Natural killer cell (primary cell): ENCODE measurements at regions of chr2 and their contacts with region 1.

Region 1: GRCh38 chr2:65264821-65265670 is 37.4 kb downstream of the ACTR2 start:
- DNase-seq: peak in 1 of 2 donors; percentile 70
- ATAC-seq: peak in 2 of 3 donors; percentile 27 to 40
- H3K4me3 ChIP-seq: no peak overlapping the region
- H3K4me3 Mint-ChIP-seq: no peak overlapping the region
- H3K27ac ChIP-seq: no peak overlapping the region
- H3K27ac Mint-ChIP-seq: peak overlapping the region; percentile 32 to 71
- H3K4me1 ChIP-seq: no peaks in the 10 kb centered on the region
- H3K4me1 Mint-ChIP-seq: peaks cover 30 to 42% of the 10 kb centered on the region in 2 donors
- H3K27me3 ChIP-seq: no peaks in the 10 kb centered on the region
- H3K27me3 Mint-ChIP-seq: no peaks in the 10 kb centered on the region
- CTCF ChIP-seq: peak; percentile 73

Region 2: DNA sequence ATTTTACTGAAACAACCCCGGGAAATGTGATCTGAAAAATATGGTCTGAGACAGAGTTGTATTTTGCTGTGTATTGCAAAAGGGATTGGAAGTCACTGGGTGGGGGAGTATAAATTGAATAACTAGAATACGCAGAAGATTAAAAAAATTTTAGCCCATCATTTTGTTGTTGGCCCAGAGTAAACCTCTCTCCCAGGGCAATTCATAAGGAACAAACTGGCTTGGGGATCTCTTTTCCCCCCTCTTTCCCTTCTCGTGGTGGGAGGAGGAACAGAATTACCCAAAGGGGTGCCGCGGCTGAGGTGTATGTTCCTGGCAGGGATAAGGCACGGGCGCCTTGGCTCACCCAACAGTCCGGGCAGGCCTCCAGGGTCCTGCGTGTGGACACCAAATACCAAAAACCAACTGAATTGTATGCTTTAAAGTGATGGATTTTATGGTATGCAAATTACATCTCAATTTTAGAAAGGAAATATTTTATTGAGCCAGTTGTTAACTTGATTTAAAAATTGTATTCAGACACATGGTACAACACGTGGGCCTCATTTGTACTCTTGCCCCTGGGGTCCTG is 288.5 kb after region 1 on chr2:
- intact Hi-C with region 1: loop called (anchors 1 kb)
- DNase-seq: no peak
- ATAC-seq: no peak
- H3K4me3 ChIP-seq: no peak overlapping the region
- H3K4me3 Mint-ChIP-seq: no peak overlapping the region
- H3K27ac ChIP-seq: no peak overlapping the region
- H3K27ac Mint-ChIP-seq: no peak overlapping the region
- H3K4me1 ChIP-seq: peaks cover 8% of the 10 kb centered on the region
- H3K4me1 Mint-ChIP-seq: peaks cover 6 to 17% of the 10 kb centered on the region in 2 donors
- H3K27me3 ChIP-seq: no peaks in the 10 kb centered on the region
- H3K27me3 Mint-ChIP-seq: peaks cover 0 to 9% of the 10 kb centered on the region in 2 donors
- CTCF ChIP-seq: peak; percentile 51

Region 3: DNA sequence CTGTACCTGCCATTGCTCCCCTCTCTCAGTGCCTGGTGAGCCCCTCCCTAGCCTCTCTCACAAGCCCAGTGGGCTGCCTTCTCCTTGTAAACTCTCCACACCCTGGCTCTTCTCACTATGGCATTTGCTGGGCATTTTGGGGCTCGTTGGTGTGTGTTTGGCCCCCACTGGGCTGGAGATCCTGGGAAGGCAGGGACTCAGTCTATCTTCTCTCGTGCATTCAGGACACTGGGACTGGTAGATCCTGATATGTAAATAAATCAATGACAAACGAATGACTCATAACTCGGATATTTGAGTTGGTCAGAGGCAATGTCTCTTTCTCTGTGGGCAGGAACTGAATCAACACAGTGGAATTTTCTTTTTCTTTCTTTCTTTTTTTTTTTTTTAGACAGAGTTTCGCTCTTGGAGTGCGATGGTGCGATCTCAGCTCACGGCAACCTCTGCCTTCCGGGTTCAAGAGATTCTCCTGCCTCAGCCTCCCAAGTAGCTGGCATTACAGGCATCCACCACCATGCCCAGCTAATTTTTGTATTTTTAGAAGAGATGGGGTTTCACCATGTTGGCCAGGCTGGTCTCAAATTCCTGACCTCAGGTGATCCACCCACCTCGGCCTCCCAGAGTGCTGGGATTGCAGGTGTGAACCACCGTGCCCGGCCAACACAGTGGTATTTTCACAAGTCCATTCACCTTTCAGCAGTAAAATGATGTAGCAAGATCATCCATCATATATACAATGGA is 312.0 kb after region 1 on chr2:
- intact Hi-C with region 1: loop called (anchors 1 kb)
- DNase-seq: no peak
- ATAC-seq: no peak
- H3K4me3 ChIP-seq: no peak overlapping the region
- H3K4me3 Mint-ChIP-seq: no peak overlapping the region
- H3K27ac ChIP-seq: no peak overlapping the region
- H3K27ac Mint-ChIP-seq: no peak overlapping the region
- H3K4me1 ChIP-seq: no peaks in the 10 kb centered on the region
- H3K4me1 Mint-ChIP-seq: peaks cover 0 to 5% of the 10 kb centered on the region in 2 donors
- H3K27me3 ChIP-seq: no peaks in the 10 kb centered on the region
- H3K27me3 Mint-ChIP-seq: peaks cover 0 to 8% of the 10 kb centered on the region in 2 donors
- CTCF ChIP-seq: no peak